Caco-2 (cell line): ENCODE measurements at regions of chr4 and their contacts with region 1.

Region 1: GRCh38 chr4:16289897-16290554 is 63.8 kb upstream of the TAPT1 start:
- DNase-seq: peak in 1 of 2 experiments; percentile 29
- H3K4me3 ChIP-seq: no peak overlapping the region
- H3K4me3 Mint-ChIP-seq: no peak overlapping the region
- H3K27ac Mint-ChIP-seq: no peak overlapping the region
- H3K4me1 ChIP-seq: no peaks in the 10 kb centered on the region
- H3K4me1 Mint-ChIP-seq: no peaks in the 10 kb centered on the region
- H3K27me3 ChIP-seq: no peaks in the 10 kb centered on the region
- H3K27me3 Mint-ChIP-seq: peaks cover 9% of the 10 kb centered on the region
- CTCF ChIP-seq: peak; percentile 40 to 45

Region 2: GRCh38 chr4:16082426-16083240 is 207.4 kb before region 1 on chr4:
- CTCF ChIA-PET with region 1: no interaction called
- POLR2A ChIA-PET with region 1: no interaction called
- intact Hi-C with region 1: no loop called
- DNase-seq: peak; percentile 80 to 81
- H3K4me3 ChIP-seq: peak overlapping the region; percentile 98
- H3K4me3 Mint-ChIP-seq: peak overlapping the region; percentile 91
- H3K27ac Mint-ChIP-seq: peak overlapping the region; percentile 85
- H3K4me1 ChIP-seq: peaks cover 11% of the 10 kb centered on the region
- H3K4me1 Mint-ChIP-seq: peaks cover 23% of the 10 kb centered on the region
- H3K27me3 ChIP-seq: no peaks in the 10 kb centered on the region
- H3K27me3 Mint-ChIP-seq: no peaks in the 10 kb centered on the region
- CTCF ChIP-seq: no peak

Region 3: GRCh38 chr4:16443504-16444088 is 153.6 kb after region 1 on chr4:
- CTCF ChIA-PET with region 1: no interaction called
- POLR2A ChIA-PET with region 1: no interaction called
- intact Hi-C with region 1: loop called (anchors 1 kb)
- DNase-seq: peak in 1 of 2 experiments; percentile 6
- H3K4me3 ChIP-seq: no peak overlapping the region
- H3K4me3 Mint-ChIP-seq: no peak overlapping the region
- H3K27ac Mint-ChIP-seq: no peak overlapping the region
- H3K4me1 ChIP-seq: no peaks in the 10 kb centered on the region
- H3K4me1 Mint-ChIP-seq: no peaks in the 10 kb centered on the region
- H3K27me3 ChIP-seq: no peaks in the 10 kb centered on the region
- H3K27me3 Mint-ChIP-seq: peaks cover 6% of the 10 kb centered on the region
- CTCF ChIP-seq: peak; percentile 47 to 48

Region 4: GRCh38 chr4:16752150-16752549 is 462.1 kb after region 1 on chr4:
- CTCF ChIA-PET with region 1: no interaction called
- POLR2A ChIA-PET with region 1: no interaction called
- intact Hi-C with region 1: loop called (anchors 10 kb)
- DNase-seq: no peak
- H3K4me3 ChIP-seq: no peak overlapping the region
- H3K4me3 Mint-ChIP-seq: no peak overlapping the region
- H3K27ac Mint-ChIP-seq: no peak overlapping the region
- H3K4me1 ChIP-seq: no peaks in the 10 kb centered on the region
- H3K4me1 Mint-ChIP-seq: no peaks in the 10 kb centered on the region
- H3K27me3 ChIP-seq: no peaks in the 10 kb centered on the region
- H3K27me3 Mint-ChIP-seq: peaks cover 3% of the 10 kb centered on the region
- CTCF ChIP-seq: no peak